Activated naive CD4-positive, alpha-beta T cell treated with anti-CD3 and anti-CD28 coated beads for 36 hours (primary cell): ENCODE measurements at regions of chr6 and their contacts with region 1.

Region 1: DNA sequence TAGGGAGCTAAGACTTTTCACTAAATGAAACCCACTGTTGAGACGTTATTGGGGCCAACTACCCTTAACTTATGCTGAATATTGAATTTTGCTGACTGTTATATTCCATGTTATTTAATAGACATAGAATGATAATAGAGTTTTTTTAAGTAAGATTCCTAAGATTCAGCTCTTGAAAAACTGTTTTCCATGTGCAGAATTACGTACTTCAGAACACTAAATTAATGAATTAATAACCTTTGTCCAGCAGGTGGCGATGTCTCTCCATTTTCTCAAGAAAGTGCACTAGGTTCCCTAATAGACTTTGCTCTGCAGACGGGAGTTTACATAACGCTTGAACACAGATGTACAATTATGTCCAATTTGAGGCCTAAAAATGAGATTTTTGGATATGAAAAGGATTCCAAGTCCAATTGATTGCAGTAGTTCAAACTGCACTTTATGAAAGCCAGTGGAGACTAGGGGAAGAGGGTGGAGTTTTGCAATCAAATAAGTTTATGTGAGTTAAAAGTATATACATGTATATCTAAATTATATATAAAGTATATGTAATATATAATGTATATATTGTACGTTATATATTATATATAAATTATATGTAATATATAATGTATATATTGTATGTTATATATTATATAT is 282.1 kb downstream of the UST start:
- DNase-seq: peak; percentile 87
- H3K4me3 Mint-ChIP-seq: no peak overlapping the region
- H3K27ac Mint-ChIP-seq: peak overlapping the region; percentile 57
- H3K4me1 Mint-ChIP-seq: peaks cover 46% of the 10 kb centered on the region
- H3K27me3 Mint-ChIP-seq: no peaks in the 10 kb centered on the region

Region 2: GRCh38 chr6:148203970-148204369 is 824.9 kb before region 1 on chr6:
- CTCF ChIA-PET with region 1: no interaction called
- intact Hi-C with region 1: loop called (anchors 5 kb)
- DNase-seq: peak; percentile 87
- H3K4me3 Mint-ChIP-seq: peak overlapping the region; percentile 48
- H3K27ac Mint-ChIP-seq: peak overlapping the region; percentile 85
- H3K4me1 Mint-ChIP-seq: peaks cover 50% of the 10 kb centered on the region
- H3K27me3 Mint-ChIP-seq: peaks cover 72% of the 10 kb centered on the region

Region 3: DNA sequence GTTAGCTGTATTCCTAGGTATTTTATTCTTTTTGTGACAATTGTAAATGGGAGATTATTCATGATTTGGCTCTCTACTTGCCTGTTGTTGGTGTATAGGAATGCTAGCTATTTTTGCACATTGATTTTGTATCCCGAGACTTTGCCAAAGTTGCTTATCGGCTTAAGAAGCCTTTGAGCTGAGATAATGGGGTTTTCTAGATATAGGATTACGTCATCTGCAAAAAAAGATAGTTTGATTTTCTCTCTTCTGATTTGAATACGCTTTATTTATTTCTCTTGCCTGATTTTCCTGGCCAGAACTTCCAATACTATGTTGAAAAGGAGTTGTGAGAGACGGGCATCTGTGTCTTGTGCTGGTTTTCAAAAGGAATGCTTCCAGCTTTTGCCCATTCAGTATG is 445.3 kb before region 1 on chr6:
- CTCF ChIA-PET with region 1: no interaction called
- intact Hi-C with region 1: no loop called
- DNase-seq: no peak
- H3K4me3 Mint-ChIP-seq: no peak overlapping the region
- H3K27ac Mint-ChIP-seq: no peak overlapping the region
- H3K4me1 Mint-ChIP-seq: no peaks in the 10 kb centered on the region
- H3K27me3 Mint-ChIP-seq: peaks cover 28% of the 10 kb centered on the region

Region 4: GRCh38 chr6:149043476-149044130 is 14.7 kb after region 1 on chr6:
- CTCF ChIA-PET with region 1: interaction called, 14 read pairs
- intact Hi-C with region 1: no loop called
- DNase-seq: peak; percentile 53
- H3K4me3 Mint-ChIP-seq: no peak overlapping the region
- H3K27ac Mint-ChIP-seq: no peak overlapping the region
- H3K4me1 Mint-ChIP-seq: peaks cover 33% of the 10 kb centered on the region
- H3K27me3 Mint-ChIP-seq: no peaks in the 10 kb centered on the region

Region 5: GRCh38 chr6:149082286-149082707 is 53.4 kb after region 1 on chr6:
- CTCF ChIA-PET with region 1: interaction called, 26 read pairs
- intact Hi-C with region 1: loop called (anchors 1 kb)
- DNase-seq: peak; percentile 97
- H3K4me3 Mint-ChIP-seq: no peak overlapping the region
- H3K27ac Mint-ChIP-seq: peak overlapping the region; percentile 41
- H3K4me1 Mint-ChIP-seq: peaks cover 54% of the 10 kb centered on the region
- H3K27me3 Mint-ChIP-seq: no peaks in the 10 kb centered on the region

Region 6: GRCh38 chr6:149235130-149235561 is 206.3 kb after region 1 on chr6:
- CTCF ChIA-PET with region 1: interaction called, 3 read pairs
- intact Hi-C with region 1: loop called (anchors 1 kb)
- DNase-seq: no peak
- H3K4me3 Mint-ChIP-seq: no peak overlapping the region
- H3K27ac Mint-ChIP-seq: peak overlapping the region; percentile 95
- H3K4me1 Mint-ChIP-seq: peaks cover 49% of the 10 kb centered on the region
- H3K27me3 Mint-ChIP-seq: no peaks in the 10 kb centered on the region

Region 7: GRCh38 chr6:149431905-149432775 is 403.3 kb after region 1 on chr6:
- CTCF ChIA-PET with region 1: interaction called, 172 read pairs
- intact Hi-C with region 1: loop called (anchors 1 kb)
- DNase-seq: peak; percentile 97
- H3K4me3 Mint-ChIP-seq: no peak overlapping the region
- H3K27ac Mint-ChIP-seq: no peak overlapping the region
- H3K4me1 Mint-ChIP-seq: peaks cover 2% of the 10 kb centered on the region
- H3K27me3 Mint-ChIP-seq: no peaks in the 10 kb centered on the region

Region 8: DNA sequence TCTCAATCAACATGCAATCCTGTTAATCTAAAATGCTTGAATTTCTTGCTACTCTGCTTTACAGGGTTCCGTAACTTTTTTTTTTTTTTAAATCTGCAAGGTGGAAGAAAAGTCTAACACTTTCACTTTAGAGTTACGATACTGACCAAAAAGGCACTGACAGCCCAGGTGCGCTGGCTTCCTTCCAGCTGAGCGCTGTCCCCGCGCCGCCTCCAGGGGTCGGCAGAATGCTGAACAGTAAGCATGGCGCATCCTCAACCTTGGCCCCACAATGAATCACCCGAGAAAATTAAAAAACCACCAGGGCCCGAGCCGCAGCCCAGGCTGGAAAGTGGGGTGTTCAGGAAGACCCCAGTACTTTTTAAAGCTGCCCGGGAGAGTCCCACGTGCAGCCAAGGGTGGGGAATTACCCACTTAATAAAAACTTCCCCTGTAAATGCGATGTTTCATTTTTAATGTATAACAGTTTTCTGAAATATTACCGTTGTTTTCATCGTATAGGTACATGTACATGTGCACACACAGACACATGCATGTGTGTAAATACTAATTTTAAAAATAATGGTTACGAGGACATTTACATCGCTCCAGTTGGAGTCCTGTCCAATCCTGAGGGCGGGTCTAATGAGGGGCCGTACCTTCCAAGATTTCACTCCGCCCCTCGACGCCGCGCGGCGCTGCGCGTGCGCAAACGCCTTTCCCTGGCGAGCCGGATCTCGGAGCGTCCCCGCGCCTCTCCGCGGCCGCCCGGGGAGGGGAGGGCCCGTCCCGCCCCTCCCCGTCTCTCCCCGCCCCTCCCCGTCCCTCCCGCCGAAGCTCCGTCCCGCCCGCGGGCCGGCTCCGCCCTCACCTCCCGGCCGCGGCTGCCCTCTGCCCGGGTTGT is 536.9 kb after region 1 on chr6 and contains the start of gene GINM1:
- CTCF ChIA-PET with region 1: no interaction called
- intact Hi-C with region 1: loop called (anchors 1 kb)
- DNase-seq: peak; percentile 97
- H3K4me3 Mint-ChIP-seq: peak within 1 kb of the TSS; percentile 92
- H3K27ac Mint-ChIP-seq: peak within 1 kb of the TSS; percentile 89
- H3K4me1 Mint-ChIP-seq: peaks cover 26% of the 10 kb centered on the region
- H3K27me3 Mint-ChIP-seq: no peaks in the 10 kb centered on the region
- total RNA-seq, gene GINM1: 17.6 to 18.4 TPM

Region 9: GRCh38 chr6:149749594-149750135 is 720.8 kb after region 1 on chr6 and contains the start of gene PCMT1:
- CTCF ChIA-PET with region 1: no interaction called
- intact Hi-C with region 1: no loop called
- DNase-seq: peak; percentile 88
- H3K4me3 Mint-ChIP-seq: peak within 1 kb of the TSS; percentile 86
- H3K27ac Mint-ChIP-seq: peak within 1 kb of the TSS; percentile 80
- H3K4me1 Mint-ChIP-seq: peaks cover 42% of the 10 kb centered on the region
- H3K27me3 Mint-ChIP-seq: no peaks in the 10 kb centered on the region
- total RNA-seq, gene PCMT1: 71.9 to 74.5 TPM